Dorsolateral prefrontal cortex (tissue), 120 donors: ENCODE measurements at regions of chr12 and their contacts with region 1.

Region 1: GRCh38 chr12:1896964-1897363 is 21.5 kb downstream of the CACNA2D4 start:
- DNase-seq: no peak
- H3K4me3 ChIP-seq: no peak overlapping the region
- H3K27ac ChIP-seq: no peak overlapping the region
- H3K27me3 ChIP-seq: peaks cover 0 to 3% (median 0%) of the 10 kb centered on the region in 45 donors
- CTCF ChIP-seq: no peak

Region 2: DNA sequence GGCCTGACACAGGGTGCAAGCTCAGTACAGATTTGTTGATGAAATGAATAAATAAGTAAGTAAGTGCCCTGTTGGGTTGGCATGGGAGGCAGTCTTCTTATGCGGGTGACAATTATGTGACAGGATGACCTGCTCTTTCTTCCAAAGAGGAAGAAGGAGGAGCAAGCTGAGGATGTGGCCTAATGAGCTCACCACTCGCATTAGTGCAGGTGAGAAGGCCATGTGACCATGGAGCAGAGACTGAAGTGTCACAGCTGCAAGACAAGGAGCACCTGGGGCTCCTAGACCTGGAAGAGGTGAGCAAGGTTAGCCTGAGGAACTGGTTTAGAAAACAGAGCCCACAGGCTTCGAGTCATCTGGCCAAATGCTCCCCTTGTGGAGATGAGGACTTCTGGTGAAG is 41.7 kb before region 1 on chr12:
- intact Hi-C with region 1: loop called in 1 of 2 experiments (anchors 5 kb)
- DNase-seq: no peak
- H3K4me3 ChIP-seq: no peak overlapping the region
- H3K27ac ChIP-seq: no peak overlapping the region
- H3K27me3 ChIP-seq: no peaks in the 10 kb centered on the region
- CTCF ChIP-seq: no peak

Region 3: GRCh38 chr12:1978078-1978862 is 81.3 kb after region 1 on chr12:
- intact Hi-C with region 1: no loop called
- DNase-seq: no peak
- H3K4me3 ChIP-seq: no peak overlapping the region
- H3K27ac ChIP-seq: no peak overlapping the region
- H3K27me3 ChIP-seq: no peaks in the 10 kb centered on the region
- CTCF ChIP-seq: no peak

Region 4: DNA sequence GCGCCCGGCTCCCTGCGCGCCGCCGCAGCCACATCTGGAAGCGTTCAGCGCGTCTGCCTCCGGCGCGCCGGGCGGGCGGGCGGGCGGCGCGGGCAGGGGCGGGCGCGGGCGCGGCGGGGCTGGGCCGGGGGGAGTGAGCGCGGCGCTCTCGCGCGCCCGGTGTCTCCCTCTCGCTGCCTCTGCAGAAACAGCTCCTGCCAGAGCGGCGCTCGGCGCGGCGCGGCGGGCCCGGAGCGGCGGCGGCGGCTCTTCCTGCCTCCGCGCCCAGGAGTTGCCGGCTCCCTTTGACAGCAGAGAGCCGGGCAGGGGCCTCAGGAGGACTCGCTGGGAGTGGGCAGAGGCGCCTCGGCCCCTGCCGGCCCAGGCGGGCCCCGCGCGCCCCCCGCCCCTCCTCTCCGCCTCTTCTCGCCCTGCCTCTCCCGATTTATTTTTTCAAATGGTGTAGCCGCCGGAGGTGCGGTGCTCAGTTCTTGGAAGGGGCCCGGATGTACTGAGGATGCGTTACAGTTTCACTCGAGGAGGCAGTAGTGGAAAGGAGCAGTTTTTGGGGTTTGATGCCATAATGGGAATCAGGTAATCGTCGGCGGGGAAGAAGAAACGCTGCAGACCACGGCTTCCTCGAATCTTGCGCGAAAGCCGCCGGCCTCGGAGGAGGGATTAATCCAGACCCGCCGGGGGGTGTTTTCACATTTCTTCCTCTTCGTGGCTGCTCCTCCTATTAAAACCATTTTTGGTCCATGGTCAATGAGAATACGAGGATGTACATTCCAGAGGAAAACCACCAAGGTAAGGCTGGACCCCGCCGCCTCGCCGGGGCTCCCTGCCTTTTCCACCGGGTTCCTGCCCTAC is 156.1 kb after region 1 on chr12 and contains the start of gene CACNA1C:
- intact Hi-C with region 1: no loop called
- DNase-seq: peak in 9 of 10 donors; percentile 37 to 79 (median 60)
- H3K4me3 ChIP-seq: peak within 1 kb of the TSS; percentile 55 to 85 (median 72)
- H3K27ac ChIP-seq: peak within 1 kb of the TSS in 57 of 59 donors; percentile 16 to 95 (median 83)
- H3K27me3 ChIP-seq: peaks cover 0 to 3% (median 0%) of the 10 kb centered on the region in 45 donors
- CTCF ChIP-seq: peak in 49 of 56 donors; percentile 7 to 63 (median 42)
- total RNA-seq, gene CACNA1C: 25.8 to 103 (median 68.4) TPM